Panc1 (cell line): ENCODE measurements at regions of chrX and their contacts with region 1.

Region 1: DNA sequence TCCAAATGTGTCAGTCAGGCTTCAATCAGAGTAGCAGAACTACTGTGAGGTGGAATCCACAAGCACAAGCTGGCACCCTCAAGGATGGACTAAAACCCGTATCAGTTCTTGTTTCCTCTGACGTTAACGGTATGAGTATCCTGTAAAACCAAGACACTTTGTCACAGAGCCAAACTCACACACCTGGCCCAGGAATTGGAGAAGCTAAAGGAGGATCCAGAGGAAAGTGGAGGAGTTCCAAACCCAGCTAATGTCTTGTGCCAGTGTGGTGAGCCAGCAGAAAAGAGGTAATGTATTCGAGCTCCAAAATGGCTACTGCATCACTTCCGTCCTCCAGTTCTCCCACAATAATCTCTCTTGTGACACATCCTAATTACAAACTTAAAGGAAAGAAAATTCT is 44.7 kb downstream of the ATP1B4 start:
- DNase-seq: no peak
- ATAC-seq: no peak
- H3K4me3 ChIP-seq: no peak overlapping the region
- H3K27ac ChIP-seq: no peak overlapping the region
- H3K4me1 ChIP-seq: no peaks in the 10 kb centered on the region
- H3K27me3 ChIP-seq: peaks cover 2% of the 10 kb centered on the region; the same call in 1 of the 2 replicates
- CTCF ChIP-seq: no peak

Region 2: GRCh38 chrX:120274958-120275357 is 131.7 kb before region 1 on chrX:
- CTCF ChIA-PET with region 1: no interaction called
- POLR2A ChIA-PET with region 1: interaction called, 11 read pairs
- in situ Hi-C with region 1: no loop called
- intact Hi-C with region 1: no loop called
- DNase-seq: no peak
- ATAC-seq: no peak
- H3K4me3 ChIP-seq: no peak overlapping the region
- H3K27ac ChIP-seq: no peak overlapping the region
- H3K4me1 ChIP-seq: no peaks in the 10 kb centered on the region
- H3K27me3 ChIP-seq: peaks cover 11% of the 10 kb centered on the region
- CTCF ChIP-seq: no peak

Region 3: GRCh38 chrX:120316589-120317283 is 89.9 kb before region 1 on chrX:
- CTCF ChIA-PET with region 1: no interaction called
- POLR2A ChIA-PET with region 1: no interaction called
- in situ Hi-C with region 1: no loop called
- intact Hi-C with region 1: no loop called
- DNase-seq: no peak
- ATAC-seq: peak; percentile 87
- H3K4me3 ChIP-seq: no peak overlapping the region
- H3K27ac ChIP-seq: no peak overlapping the region
- H3K4me1 ChIP-seq: no peaks in the 10 kb centered on the region
- H3K27me3 ChIP-seq: peaks cover 31% of the 10 kb centered on the region
- CTCF ChIP-seq: no peak

Region 4: DNA sequence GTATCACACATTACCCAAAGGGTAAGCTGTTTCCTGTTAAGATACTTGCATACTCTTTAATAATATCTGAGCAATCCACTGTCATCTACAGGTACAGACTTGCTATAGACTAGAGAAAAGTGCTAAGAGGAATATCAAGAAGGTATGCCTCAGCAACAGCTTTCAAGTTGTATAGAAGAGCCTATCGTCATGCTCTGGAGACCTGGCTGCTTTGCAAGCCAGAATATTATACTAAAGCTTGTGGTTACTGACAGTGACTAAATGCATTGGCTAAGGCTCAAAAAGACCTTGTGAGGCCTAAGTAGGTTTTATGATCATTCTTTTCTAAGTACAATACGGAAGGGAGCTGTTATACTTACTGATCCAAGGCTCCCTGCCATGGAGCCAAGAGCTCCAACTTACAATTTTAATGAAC is 51.1 kb after region 1 on chrX:
- CTCF ChIA-PET with region 1: no interaction called
- POLR2A ChIA-PET with region 1: no interaction called
- in situ Hi-C with region 1: no loop called
- intact Hi-C with region 1: no loop called
- DNase-seq: peak; percentile 5
- ATAC-seq: peak; percentile 75
- H3K4me3 ChIP-seq: no peak overlapping the region
- H3K27ac ChIP-seq: no peak overlapping the region
- H3K4me1 ChIP-seq: peaks cover 12% of the 10 kb centered on the region; the same call in 1 of the 2 replicates
- H3K27me3 ChIP-seq: no peaks in the 10 kb centered on the region
- CTCF ChIP-seq: no peak